ENCODE measurements at regions of chr3 and their contacts with region 1.

Region 1: GRCh38 chr3:69161587-69162307 is 39.4 kb upstream of the LMOD3 start:
- DNase-seq: peak in 2 of 4 donors; percentile 30 to 62
- ATAC-seq: peak; percentile 96
- H3K4me3 ChIP-seq: no peak overlapping the region
- H3K27ac ChIP-seq: no peak overlapping the region
- H3K4me1 ChIP-seq: no peaks in the 10 kb centered on the region
- H3K27me3 ChIP-seq: no peaks in the 10 kb centered on the region
- CTCF ChIP-seq: peak; percentile 90 to 93

Region 2: GRCh38 chr3:69306239-69307185 is 144.8 kb after region 1 on chr3:
- intact Hi-C with region 1: loop called in 1 of 2 experiments (anchors 10 kb)
- DNase-seq: peak in 3 of 4 donors; percentile 74 to 91 (median 80)
- ATAC-seq: peak; percentile 97
- H3K4me3 ChIP-seq: no peak overlapping the region
- H3K27ac ChIP-seq: peak overlapping the region; percentile 21 to 41
- H3K4me1 ChIP-seq: peaks cover 3 to 23% of the 10 kb centered on the region in 2 donors
- H3K27me3 ChIP-seq: no peaks in the 10 kb centered on the region
- CTCF ChIP-seq: peak; percentile 91 to 93

Region 3: DNA sequence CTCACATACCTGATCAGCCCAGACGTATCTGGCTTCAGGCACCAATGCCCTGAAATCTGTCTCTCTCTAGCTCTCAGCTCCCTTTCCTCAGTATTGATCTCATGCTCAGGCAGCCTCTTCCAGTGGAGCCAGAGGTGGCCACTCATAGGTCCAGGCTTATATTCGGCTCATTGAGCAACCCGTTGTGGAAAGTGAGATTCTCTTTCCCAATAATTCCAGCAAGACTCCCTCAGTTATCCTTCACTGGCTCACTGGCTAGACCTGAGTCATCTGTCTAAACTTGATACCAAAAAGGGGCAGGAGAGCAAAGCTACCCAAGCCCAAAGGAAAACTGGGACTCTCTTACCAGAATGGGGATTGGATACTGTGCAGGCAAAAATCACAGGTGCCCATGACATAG is 257.5 kb after region 1 on chr3:
- intact Hi-C with region 1: loop called in 1 of 2 experiments (anchors 5 kb)
- DNase-seq: no peak
- ATAC-seq: no peak
- H3K4me3 ChIP-seq: no peak overlapping the region
- H3K27ac ChIP-seq: no peak overlapping the region
- H3K4me1 ChIP-seq: peaks cover 7 to 18% of the 10 kb centered on the region in 2 donors
- H3K27me3 ChIP-seq: no peaks in the 10 kb centered on the region
- CTCF ChIP-seq: no peak

Region 4: DNA sequence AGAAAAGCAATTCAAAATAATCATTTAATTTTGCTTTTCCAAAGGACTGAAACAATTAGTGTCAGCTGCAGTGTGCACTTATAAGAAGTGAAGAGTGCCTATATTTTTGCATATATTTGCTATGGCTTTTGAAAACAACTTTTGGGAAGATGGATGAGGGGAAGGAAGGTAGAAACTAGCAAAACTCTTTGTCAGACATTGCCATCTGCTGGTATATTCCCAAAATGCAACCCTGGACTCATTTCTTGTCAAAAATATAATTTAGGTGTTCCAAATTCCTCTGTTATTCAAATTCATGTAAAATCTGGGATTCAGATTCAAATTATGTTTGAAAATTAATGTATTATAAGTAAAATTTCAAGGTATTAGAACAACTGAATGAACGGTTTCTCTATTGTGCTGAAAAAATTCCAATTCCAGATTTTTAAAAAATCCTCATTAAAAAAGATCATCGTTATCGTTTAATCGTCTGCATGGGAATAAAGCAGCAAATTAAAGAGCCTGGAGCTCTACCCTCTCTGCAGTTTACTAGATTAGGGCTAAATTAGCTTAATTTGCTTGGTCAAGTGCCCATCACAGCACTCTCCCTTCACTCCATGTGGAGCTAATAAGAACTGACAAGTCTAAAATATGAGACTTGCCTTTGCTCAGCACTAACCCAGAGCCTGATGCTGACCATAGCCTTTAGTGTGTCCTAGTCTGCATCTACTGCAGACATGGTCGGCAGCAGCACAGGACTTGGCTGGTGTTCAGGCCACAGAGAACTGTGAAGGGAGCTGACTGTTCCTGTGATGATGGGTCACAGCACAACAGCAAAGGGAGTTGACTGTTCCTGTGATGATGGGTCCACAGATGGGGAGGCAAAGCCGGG is 509.6 kb after region 1 on chr3:
- intact Hi-C with region 1: loop called in 1 of 2 experiments (anchors 5 kb)
- DNase-seq: peak in 1 of 4 donors; percentile 56
- ATAC-seq: peak; percentile 71
- H3K4me3 ChIP-seq: no peak overlapping the region
- H3K27ac ChIP-seq: no peak overlapping the region
- H3K4me1 ChIP-seq: no peaks in the 10 kb centered on the region
- H3K27me3 ChIP-seq: no peaks in the 10 kb centered on the region
- CTCF ChIP-seq: peak; percentile 63 to 67

Measured in left lung (tissue), 14 donors.